ENCODE measurements at regions of chr1 and their contacts with region 1.

Region 1: GRCh38 chr1:47883965-47884364 is 113.2 kb downstream of the TRABD2B start:
- DNase-seq: no peak
- ATAC-seq: no peak
- H3K4me3 ChIP-seq: no peak overlapping the region
- H3K27ac ChIP-seq: no peak overlapping the region
- H3K4me1 ChIP-seq: no peaks in the 10 kb centered on the region
- H3K27me3 ChIP-seq: no peaks in the 10 kb centered on the region
- CTCF ChIP-seq: no peak

Region 2: DNA sequence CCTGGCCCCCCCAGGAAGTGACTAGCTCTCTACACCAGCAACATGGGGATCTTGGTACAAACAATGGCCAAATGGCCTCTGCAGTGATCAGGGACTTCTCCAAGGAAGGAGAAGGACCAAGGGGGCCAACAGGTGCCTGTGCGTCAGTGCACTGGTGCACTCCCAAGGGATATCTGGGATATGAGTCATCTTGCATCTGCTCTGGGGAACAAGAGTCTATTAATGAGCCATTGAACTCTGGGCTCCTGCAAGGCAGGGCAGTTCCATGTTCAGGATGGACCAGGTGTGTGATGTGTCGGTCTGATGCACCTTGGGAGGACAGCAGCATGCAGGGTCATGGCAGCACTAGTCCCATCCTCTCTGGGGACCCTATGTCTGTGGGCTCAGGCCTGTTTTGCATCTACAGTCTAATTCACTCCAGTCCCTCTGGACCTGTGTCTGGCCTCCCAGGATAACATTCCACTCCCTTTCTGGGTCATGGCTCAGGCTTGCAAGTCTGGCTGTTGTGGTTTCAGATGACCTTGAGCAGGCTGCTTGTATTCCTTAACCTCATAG is 12.1 kb before region 1 on chr1:
- intact Hi-C with region 1: loop called in 1 of 10 experiments (anchors 2 kb)
- DNase-seq: no peak
- ATAC-seq: peak in 1 of 8 donors; percentile 40
- H3K4me3 ChIP-seq: no peak overlapping the region
- H3K27ac ChIP-seq: no peak overlapping the region
- H3K4me1 ChIP-seq: peaks cover 3 to 29% (median 12%) of the 10 kb centered on the region in 9 donors
- H3K27me3 ChIP-seq: peaks cover 0 to 3% (median 0%) of the 10 kb centered on the region in 7 donors
- CTCF ChIP-seq: no peak

Measured in heart right ventricle (tissue), 16 donors.